CD4-positive, alpha-beta T cell (primary cell): ENCODE measurements at regions of chr11 and their contacts with region 1.

Region 1: GRCh38 chr11:114197799-114198500 is 98.2 kb upstream of the NNMT start:
- DNase-seq: no peak
- ATAC-seq: no peak
- H3K4me3 ChIP-seq: no peak overlapping the region
- H3K4me3 Mint-ChIP-seq: no peak overlapping the region
- H3K27ac ChIP-seq: no peak overlapping the region
- H3K27ac Mint-ChIP-seq: no peak overlapping the region
- H3K4me1 ChIP-seq: peaks cover 15% of the 10 kb centered on the region
- H3K4me1 Mint-ChIP-seq: peaks cover 38% of the 10 kb centered on the region
- H3K27me3 ChIP-seq: no peaks in the 10 kb centered on the region
- H3K27me3 Mint-ChIP-seq: no peaks in the 10 kb centered on the region
- CTCF ChIP-seq: no peak

Region 2: GRCh38 chr11:113896156-113896879 is 301.6 kb before region 1 on chr11:
- CTCF ChIA-PET with region 1: no interaction called
- POLR2A ChIA-PET with region 1: no interaction called
- intact Hi-C with region 1: loop called (anchors 1 kb)
- DNase-seq: peak in 12 of 14 experiments; percentile 5 to 67 (median 22)
- ATAC-seq: peak; percentile 48
- H3K4me3 ChIP-seq: no peak overlapping the region
- H3K4me3 Mint-ChIP-seq: no peak overlapping the region
- H3K27ac ChIP-seq: no peak overlapping the region
- H3K27ac Mint-ChIP-seq: no peak overlapping the region
- H3K4me1 ChIP-seq: no peaks in the 10 kb centered on the region
- H3K4me1 Mint-ChIP-seq: no peaks in the 10 kb centered on the region
- H3K27me3 ChIP-seq: no peaks in the 10 kb centered on the region
- H3K27me3 Mint-ChIP-seq: no peaks in the 10 kb centered on the region
- CTCF ChIP-seq: peak; percentile 62

Region 3: GRCh38 chr11:113994077-113994954 is 203.6 kb before region 1 on chr11:
- CTCF ChIA-PET with region 1: no interaction called
- POLR2A ChIA-PET with region 1: no interaction called
- intact Hi-C with region 1: loop called in 1 of 2 experiments (anchors 2 kb)
- DNase-seq: peak; percentile 8 to 61 (median 28)
- ATAC-seq: no peak
- H3K4me3 ChIP-seq: no peak overlapping the region
- H3K4me3 Mint-ChIP-seq: no peak overlapping the region
- H3K27ac ChIP-seq: no peak overlapping the region
- H3K27ac Mint-ChIP-seq: no peak overlapping the region
- H3K4me1 ChIP-seq: peaks cover 8% of the 10 kb centered on the region
- H3K4me1 Mint-ChIP-seq: no peaks in the 10 kb centered on the region
- H3K27me3 ChIP-seq: peaks cover 8 to 11% of the 10 kb centered on the region in 2 experiments
- H3K27me3 Mint-ChIP-seq: peaks cover 35% of the 10 kb centered on the region
- CTCF ChIP-seq: peak; percentile 77

Region 4: GRCh38 chr11:114036156-114036811 is 161.7 kb before region 1 on chr11:
- CTCF ChIA-PET with region 1: interaction called, 3 read pairs
- POLR2A ChIA-PET with region 1: no interaction called
- intact Hi-C with region 1: loop called (anchors 1 kb)
- DNase-seq: peak; percentile 22 to 74 (median 49)
- ATAC-seq: peak; percentile 56
- H3K4me3 ChIP-seq: peak overlapping the region; percentile 19
- H3K4me3 Mint-ChIP-seq: no peak overlapping the region
- H3K27ac ChIP-seq: no peak overlapping the region
- H3K27ac Mint-ChIP-seq: no peak overlapping the region
- H3K4me1 ChIP-seq: peaks cover 10% of the 10 kb centered on the region
- H3K4me1 Mint-ChIP-seq: no peaks in the 10 kb centered on the region
- H3K27me3 ChIP-seq: peaks cover 0 to 3% of the 10 kb centered on the region in 2 experiments
- H3K27me3 Mint-ChIP-seq: no peaks in the 10 kb centered on the region
- CTCF ChIP-seq: peak; percentile 74

Region 5: DNA sequence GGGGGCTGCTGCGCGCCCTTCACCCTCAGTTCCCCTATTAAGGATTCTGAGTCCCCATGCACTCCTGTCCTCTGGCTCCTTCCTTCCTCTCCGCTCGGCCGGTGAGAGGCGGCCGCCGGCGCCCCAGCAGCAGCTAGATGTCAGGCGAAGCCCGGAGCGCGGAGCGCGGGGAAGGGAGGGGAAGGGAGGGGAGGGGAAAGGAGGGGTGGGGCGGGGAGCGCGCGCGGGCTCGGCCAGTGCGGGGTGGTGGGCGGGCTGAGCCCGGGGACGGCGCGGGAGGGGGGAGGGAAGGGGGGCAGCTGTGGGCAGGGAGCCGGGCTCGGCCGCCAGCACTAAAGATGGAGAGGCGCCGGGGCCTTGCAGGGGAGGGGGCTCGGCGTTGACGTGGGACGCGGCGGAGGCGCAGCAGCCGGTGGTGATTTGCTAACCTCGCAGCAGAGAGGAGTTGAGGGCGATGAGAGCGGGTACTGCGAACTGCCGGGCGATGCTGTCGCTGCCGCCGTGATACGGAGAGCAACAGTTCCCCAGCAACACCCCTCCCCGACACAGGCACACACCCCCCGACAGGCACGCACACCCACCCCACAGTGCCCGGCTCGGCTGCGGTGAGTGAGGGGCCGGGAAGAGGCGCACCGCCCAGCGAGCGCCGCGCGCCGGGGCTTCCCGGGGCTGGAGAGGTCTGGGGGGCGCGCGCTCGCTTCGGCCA is 138.5 kb before region 1 on chr11 and contains the start of gene ZBTB16:
- CTCF ChIA-PET with region 1: no interaction called
- POLR2A ChIA-PET with region 1: interaction called, 4 read pairs
- intact Hi-C with region 1: loop called in 1 of 2 experiments (anchors 5 kb)
- DNase-seq: peak; percentile 34 to 84 (median 56)
- ATAC-seq: peak; percentile 73
- H3K4me3 ChIP-seq: peak within 1 kb of the TSS; percentile 67
- H3K4me3 Mint-ChIP-seq: peak within 1 kb of the TSS; percentile 95
- H3K27ac ChIP-seq: peak within 1 kb of the TSS in 1 of 2 donors; percentile 21
- H3K27ac Mint-ChIP-seq: peak within 1 kb of the TSS; percentile 64
- H3K4me1 ChIP-seq: peaks cover 33% of the 10 kb centered on the region
- H3K4me1 Mint-ChIP-seq: peaks cover 9% of the 10 kb centered on the region
- H3K27me3 ChIP-seq: peaks cover 25 to 28% of the 10 kb centered on the region in 2 experiments
- H3K27me3 Mint-ChIP-seq: peaks cover 51% of the 10 kb centered on the region
- CTCF ChIP-seq: peak; percentile 23
- total RNA-seq, gene ZBTB16: 19.1 to 20.6 TPM

Region 6: GRCh38 chr11:114115451-114115928 is 82.5 kb before region 1 on chr11:
- CTCF ChIA-PET with region 1: no interaction called
- POLR2A ChIA-PET with region 1: no interaction called
- intact Hi-C with region 1: no loop called
- DNase-seq: no peak
- ATAC-seq: no peak
- H3K4me3 ChIP-seq: no peak overlapping the region
- H3K4me3 Mint-ChIP-seq: no peak overlapping the region
- H3K27ac ChIP-seq: no peak overlapping the region
- H3K27ac Mint-ChIP-seq: no peak overlapping the region
- H3K4me1 ChIP-seq: no peaks in the 10 kb centered on the region
- H3K4me1 Mint-ChIP-seq: peaks cover 17% of the 10 kb centered on the region
- H3K27me3 ChIP-seq: no peaks in the 10 kb centered on the region
- H3K27me3 Mint-ChIP-seq: peaks cover 29% of the 10 kb centered on the region
- CTCF ChIP-seq: no peak

Region 7: GRCh38 chr11:114219559-114220349 is 21.8 kb after region 1 on chr11:
- CTCF ChIA-PET with region 1: no interaction called
- POLR2A ChIA-PET with region 1: no interaction called
- intact Hi-C with region 1: no loop called
- DNase-seq: no peak
- ATAC-seq: no peak
- H3K4me3 ChIP-seq: no peak overlapping the region
- H3K4me3 Mint-ChIP-seq: no peak overlapping the region
- H3K27ac ChIP-seq: no peak overlapping the region
- H3K27ac Mint-ChIP-seq: no peak overlapping the region
- H3K4me1 ChIP-seq: peaks cover 33% of the 10 kb centered on the region
- H3K4me1 Mint-ChIP-seq: peaks cover 22% of the 10 kb centered on the region
- H3K27me3 ChIP-seq: no peaks in the 10 kb centered on the region
- H3K27me3 Mint-ChIP-seq: no peaks in the 10 kb centered on the region
- CTCF ChIP-seq: no peak

Region 8: GRCh38 chr11:114762408-114762807 is 564.5 kb after region 1 on chr11:
- CTCF ChIA-PET with region 1: no interaction called
- POLR2A ChIA-PET with region 1: no interaction called
- intact Hi-C with region 1: no loop called
- DNase-seq: peak in 4 of 14 experiments; percentile 6 to 40 (median 19)
- ATAC-seq: no peak
- H3K4me3 ChIP-seq: no peak overlapping the region
- H3K4me3 Mint-ChIP-seq: no peak overlapping the region
- H3K27ac ChIP-seq: no peak overlapping the region
- H3K27ac Mint-ChIP-seq: no peak overlapping the region
- H3K4me1 ChIP-seq: no peaks in the 10 kb centered on the region
- H3K4me1 Mint-ChIP-seq: no peaks in the 10 kb centered on the region
- H3K27me3 ChIP-seq: peaks cover 0 to 5% of the 10 kb centered on the region in 2 experiments
- H3K27me3 Mint-ChIP-seq: peaks cover 35% of the 10 kb centered on the region
- CTCF ChIP-seq: no peak